ENCODE measurements at regions of chr7 and their contacts with region 1.

Region 1: GRCh38 chr7:94087664-94088352 is 83.7 kb upstream of the BET1 start:
- DNase-seq: peak; percentile 66
- ATAC-seq: peak; percentile 97
- H3K4me3 ChIP-seq: no peak overlapping the region
- H3K27ac ChIP-seq: no peak overlapping the region
- H3K4me1 ChIP-seq: no peaks in the 10 kb centered on the region
- H3K27me3 ChIP-seq: no peaks in the 10 kb centered on the region; a peak in 1 of 4 replicates
- CTCF ChIP-seq: peak; percentile 77 to 89 (median 87); a peak in 5 of 6 replicates
- EP300 ChIP-seq: no peak
- POLR2A ChIP-seq: no peak
- RAD21 ChIP-seq: peak; percentile 96

Region 2: DNA sequence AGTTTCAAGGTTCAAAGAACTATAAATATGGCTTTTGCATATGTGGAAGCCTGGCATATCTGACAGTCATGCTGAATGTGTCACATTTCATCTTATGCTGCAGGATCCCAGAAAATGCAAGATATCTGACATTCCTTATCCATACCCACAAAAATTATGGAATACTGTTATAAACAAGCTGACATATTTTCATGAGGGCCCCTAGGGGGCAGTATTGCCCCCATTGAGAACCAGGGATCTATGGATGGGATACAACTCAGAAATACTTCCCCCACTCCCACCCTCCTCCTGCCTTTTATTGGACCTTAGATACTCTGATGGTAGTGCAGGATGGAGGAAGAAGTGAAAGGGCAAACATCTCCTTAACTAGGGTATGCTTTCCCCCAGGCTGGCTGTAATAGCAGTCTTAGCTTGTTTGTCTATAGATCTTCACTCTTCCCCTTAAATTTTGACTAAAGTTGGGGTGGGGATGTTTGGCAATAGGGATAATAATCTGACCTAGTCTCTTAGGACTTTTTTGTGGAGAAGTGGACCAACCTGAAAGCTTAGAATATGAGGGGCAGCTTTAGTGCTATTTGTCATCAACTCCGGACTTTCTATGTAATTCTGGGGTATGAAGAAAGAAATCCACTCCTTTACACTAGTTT is 184.9 kb before region 1 on chr7:
- CTCF ChIA-PET with region 1: interaction called, 172 read pairs
- POLR2A ChIA-PET with region 1: no interaction called
- RAD21 ChIA-PET with region 1: interaction called, 65 read pairs
- SMC1A ChIA-PET with region 1: interaction called, 113 read pairs
- in situ Hi-C with region 1: loop called (anchors 5 kb)
- intact Hi-C with region 1: loop called (anchors 1 kb)
- DNase-seq: no peak
- ATAC-seq: peak; percentile 56
- H3K4me3 ChIP-seq: no peak overlapping the region
- H3K27ac ChIP-seq: no peak overlapping the region
- H3K4me1 ChIP-seq: no peaks in the 10 kb centered on the region
- H3K27me3 ChIP-seq: no peaks in the 10 kb centered on the region
- CTCF ChIP-seq: peak; percentile 66 to 72 (median 69)
- EP300 ChIP-seq: no peak
- POLR2A ChIP-seq: no peak
- RAD21 ChIP-seq: peak; percentile 86

Region 3: GRCh38 chr7:94028768-94029167 is 59.0 kb before region 1 on chr7:
- CTCF ChIA-PET with region 1: interaction called, 6 read pairs
- POLR2A ChIA-PET with region 1: no interaction called
- RAD21 ChIA-PET with region 1: interaction called, 9 read pairs
- SMC1A ChIA-PET with region 1: interaction called, 10 read pairs
- in situ Hi-C with region 1: no loop called
- intact Hi-C with region 1: no loop called
- DNase-seq: no peak
- ATAC-seq: peak; percentile 55
- H3K4me3 ChIP-seq: no peak overlapping the region
- H3K27ac ChIP-seq: no peak overlapping the region
- H3K4me1 ChIP-seq: no peaks in the 10 kb centered on the region
- H3K27me3 ChIP-seq: no peaks in the 10 kb centered on the region
- CTCF ChIP-seq: no peak
- EP300 ChIP-seq: no peak
- POLR2A ChIP-seq: no peak
- RAD21 ChIP-seq: no peak

Region 4: GRCh38 chr7:94056796-94057207 is 31.0 kb before region 1 on chr7:
- CTCF ChIA-PET with region 1: interaction called, 6 read pairs
- POLR2A ChIA-PET with region 1: interaction called, 6 read pairs
- RAD21 ChIA-PET with region 1: interaction called, 6 read pairs
- SMC1A ChIA-PET with region 1: interaction called, 24 read pairs
- in situ Hi-C with region 1: no loop called
- intact Hi-C with region 1: no loop called
- DNase-seq: no peak
- ATAC-seq: no peak
- H3K4me3 ChIP-seq: no peak overlapping the region
- H3K27ac ChIP-seq: no peak overlapping the region
- H3K4me1 ChIP-seq: peaks cover 20% of the 10 kb centered on the region
- H3K27me3 ChIP-seq: no peaks in the 10 kb centered on the region
- CTCF ChIP-seq: no peak
- EP300 ChIP-seq: no peak
- POLR2A ChIP-seq: no peak
- RAD21 ChIP-seq: no peak

Region 5: GRCh38 chr7:94129443-94130140 is 41.8 kb after region 1 on chr7:
- CTCF ChIA-PET with region 1: interaction called, 11 read pairs
- POLR2A ChIA-PET with region 1: no interaction called
- RAD21 ChIA-PET with region 1: interaction called, 14 read pairs
- SMC1A ChIA-PET with region 1: interaction called, 9 read pairs
- in situ Hi-C with region 1: no loop called
- intact Hi-C with region 1: no loop called
- DNase-seq: no peak
- ATAC-seq: no peak
- H3K4me3 ChIP-seq: no peak overlapping the region
- H3K27ac ChIP-seq: no peak overlapping the region
- H3K4me1 ChIP-seq: no peaks in the 10 kb centered on the region
- H3K27me3 ChIP-seq: no peaks in the 10 kb centered on the region
- CTCF ChIP-seq: no peak
- EP300 ChIP-seq: no peak
- POLR2A ChIP-seq: no peak
- RAD21 ChIP-seq: no peak

Region 6: DNA sequence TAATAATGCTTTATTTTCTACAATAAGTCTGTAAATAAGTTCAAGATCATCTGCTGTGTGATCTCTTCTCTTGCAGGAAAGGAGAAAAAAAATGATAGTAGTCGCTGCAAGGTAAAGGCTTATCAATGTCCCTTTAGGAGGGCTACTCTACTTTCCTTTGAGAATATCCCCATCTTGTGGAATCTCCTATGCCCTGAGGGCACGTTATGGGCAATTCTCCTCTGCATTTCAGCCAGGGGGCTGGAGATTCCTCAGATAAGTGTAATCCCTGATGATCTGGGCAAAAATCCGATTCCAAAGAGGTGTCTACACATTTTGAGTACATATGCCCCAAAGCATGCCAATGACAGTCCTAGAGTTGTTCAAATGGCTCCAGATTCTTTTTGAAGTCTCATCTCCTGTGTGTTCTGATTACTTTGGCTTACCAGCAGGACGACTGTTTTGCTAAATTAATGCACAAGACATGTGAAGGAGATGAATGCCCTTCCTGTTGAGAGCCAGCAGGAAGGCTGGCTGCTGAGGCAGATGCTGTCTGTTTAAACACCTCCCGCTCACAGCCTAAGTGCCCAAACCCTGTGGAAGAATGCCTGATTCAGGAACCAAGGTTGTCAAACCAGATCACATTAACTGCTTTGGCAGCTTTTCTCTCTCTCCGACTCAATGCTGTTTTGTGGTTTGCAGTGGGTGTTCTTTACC is 135.7 kb after region 1 on chr7:
- CTCF ChIA-PET with region 1: interaction called, 18 read pairs
- POLR2A ChIA-PET with region 1: no interaction called
- RAD21 ChIA-PET with region 1: interaction called, 10 read pairs
- SMC1A ChIA-PET with region 1: interaction called, 7 read pairs
- in situ Hi-C with region 1: no loop called
- intact Hi-C with region 1: loop called (anchors 5 kb)
- DNase-seq: no peak
- ATAC-seq: peak; percentile 83
- H3K4me3 ChIP-seq: no peak overlapping the region
- H3K27ac ChIP-seq: no peak overlapping the region
- H3K4me1 ChIP-seq: no peaks in the 10 kb centered on the region
- H3K27me3 ChIP-seq: no peaks in the 10 kb centered on the region
- CTCF ChIP-seq: peak; percentile 20 to 55 (median 27); a peak in 3 of 6 replicates
- EP300 ChIP-seq: no peak
- POLR2A ChIP-seq: no peak
- RAD21 ChIP-seq: peak; percentile 67

Measured in GM12878 (cell line).